Naive thymus-derived CD4-positive, alpha-beta T cell (primary cell): ENCODE measurements at regions of chr10 and their contacts with region 1.

Region 1: DNA sequence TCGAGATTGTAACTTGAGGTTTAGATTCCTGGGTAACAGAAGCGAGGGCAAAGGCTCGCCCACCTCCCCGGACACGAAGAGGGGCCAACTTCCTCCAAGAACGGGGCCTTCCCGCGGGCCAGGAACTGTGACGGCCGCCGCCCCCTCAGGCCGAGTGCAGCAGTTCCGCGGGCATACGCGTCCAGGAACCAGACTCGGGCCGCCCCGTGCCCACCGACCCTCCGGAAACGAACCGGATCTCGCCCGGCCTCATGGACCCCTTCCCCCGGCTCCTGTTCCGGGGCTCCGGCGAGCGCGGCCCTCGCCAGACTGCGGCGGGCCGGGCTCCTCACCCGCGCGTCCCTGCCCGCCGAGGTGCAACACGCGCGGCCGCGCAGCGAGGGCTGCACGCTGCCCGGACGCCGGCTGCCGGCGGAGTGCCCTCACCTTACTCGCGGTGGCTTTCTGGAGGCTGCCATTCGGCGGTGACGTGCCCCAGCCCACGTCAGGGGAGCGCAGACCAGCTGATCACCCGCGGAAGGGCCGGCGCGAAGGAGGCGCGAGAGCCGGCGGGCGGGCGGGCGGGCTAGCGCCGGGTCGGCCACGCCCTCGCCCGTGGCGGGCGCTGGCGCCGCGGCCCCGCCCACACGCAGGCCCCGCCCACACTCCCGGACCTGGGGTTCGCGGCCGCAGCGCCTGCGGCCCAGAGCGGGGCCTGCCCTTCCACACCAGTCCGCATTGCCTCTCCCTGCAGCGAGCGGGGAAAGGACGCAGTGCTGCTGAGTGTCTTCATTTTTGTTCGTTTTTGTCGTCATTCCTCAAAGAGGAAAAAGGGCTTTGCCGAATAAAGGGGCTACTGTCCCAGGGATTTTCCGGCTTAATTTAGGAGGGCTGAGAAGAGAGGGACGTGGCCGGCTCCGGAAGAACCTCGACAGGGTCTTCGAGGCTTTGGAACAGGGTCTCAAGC is at the start of gene XPNPEP1:
- DNase-seq: peak; percentile 55 to 90 (median 66)
- ATAC-seq: peak; percentile 98
- H3K4me3 ChIP-seq: peak within 1 kb of the TSS; percentile 67
- H3K4me3 Mint-ChIP-seq: peak within 1 kb of the TSS; percentile 78 to 94 (median 90)
- H3K27ac ChIP-seq: peak within 1 kb of the TSS; percentile 83
- H3K27ac Mint-ChIP-seq: peak within 1 kb of the TSS; percentile 75 to 95 (median 89)
- H3K4me1 ChIP-seq: peaks cover 30 to 39% of the 10 kb centered on the region in 2 donors
- H3K4me1 Mint-ChIP-seq: peaks cover 36 to 58% (median 54%) of the 10 kb centered on the region in 7 donors
- H3K27me3 ChIP-seq: no peaks in the 10 kb centered on the region
- H3K27me3 Mint-ChIP-seq: peaks cover 0 to 16% (median 0%) of the 10 kb centered on the region in 5 donors
- total RNA-seq, gene XPNPEP1: 44.1 to 100 (median 60.7) TPM

Region 2: GRCh38 chr10:109902934-109903589 is 20.2 kb before region 1 on chr10:
- CTCF ChIA-PET with region 1: no interaction called
- POLR2A ChIA-PET with region 1: interaction called, 4 read pairs
- intact Hi-C with region 1: loop called (anchors 2 kb)
- DNase-seq: peak in 2 of 9 donors; percentile 32 to 43
- ATAC-seq: peak; percentile 78
- H3K4me3 ChIP-seq: peak overlapping the region; percentile 5
- H3K4me3 Mint-ChIP-seq: peak overlapping the region in 9 of 10 donors; percentile 8 to 76 (median 60)
- H3K27ac ChIP-seq: no peak overlapping the region
- H3K27ac Mint-ChIP-seq: peak overlapping the region in 8 of 9 donors; percentile 79 to 93 (median 86)
- H3K4me1 ChIP-seq: peaks cover 0 to 14% of the 10 kb centered on the region in 2 donors
- H3K4me1 Mint-ChIP-seq: peaks cover 27 to 68% (median 52%) of the 10 kb centered on the region in 7 donors
- H3K27me3 ChIP-seq: no peaks in the 10 kb centered on the region
- H3K27me3 Mint-ChIP-seq: no peaks in the 10 kb centered on the region